H1 (cell line): ENCODE measurements at regions of chr10 and their contacts with region 1.

Region 1: DNA sequence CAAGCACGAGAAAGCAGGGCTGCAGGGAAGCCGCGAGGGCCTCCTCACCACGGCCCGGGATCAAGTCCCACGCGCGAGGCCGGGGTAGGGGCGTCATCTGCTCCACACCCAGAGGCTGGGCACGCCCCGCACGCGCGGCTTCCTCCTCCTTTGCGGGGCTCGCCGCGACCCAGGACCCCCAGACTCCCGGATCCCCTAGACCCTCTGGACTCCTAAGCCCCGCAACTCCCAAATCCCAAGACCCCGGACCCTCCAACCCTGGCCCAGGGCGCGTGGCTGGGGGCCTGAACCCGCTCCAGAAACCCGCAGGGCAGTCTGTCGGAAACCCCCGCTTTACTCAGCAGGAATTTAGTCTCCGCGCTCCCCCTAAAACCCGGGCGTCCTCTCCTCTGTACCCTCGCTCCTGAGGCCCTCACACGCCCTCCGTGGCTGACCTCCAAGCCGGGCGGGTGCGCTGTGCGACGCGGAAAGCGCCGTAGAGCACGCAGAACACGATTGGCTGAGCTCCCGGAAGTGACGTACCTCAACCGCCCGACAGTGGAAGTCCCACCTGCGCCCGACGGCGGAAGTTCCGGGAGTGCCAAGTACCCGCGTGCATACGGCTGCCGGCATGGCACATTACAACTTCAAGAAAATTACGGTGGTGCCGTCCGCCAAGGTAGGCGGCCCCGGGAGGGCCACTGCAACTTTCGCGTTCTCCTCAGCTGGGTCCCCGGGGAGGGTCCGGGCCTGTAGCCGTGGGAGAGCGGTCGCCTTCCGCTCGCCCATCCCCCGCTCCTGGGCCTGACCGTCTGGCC is at the start of gene GTPBP4:
- DNase-seq: peak; percentile 79 to 95
- H3K4me3 ChIP-seq: peak within 1 kb of the TSS; percentile 83 to 99 (median 93)
- H3K27ac ChIP-seq: peak within 1 kb of the TSS; percentile 86
- H3K4me1 ChIP-seq: peaks cover 0 to 3% (median 1%) of the 10 kb centered on the region in 4 experiments; a peak in 3 of 7 replicates
- H3K27me3 ChIP-seq: no peaks in the 10 kb centered on the region
- CTCF ChIP-seq: peak in 2 of 3 experiments; percentile 33 to 46; a peak in 3 of 4 replicates
- EP300 ChIP-seq: peak in 1 of 2 experiments; percentile 3; a peak in 1 of 3 replicates
- POLR2A ChIP-seq: peak; percentile 77 to 86
- RAD21 ChIP-seq: no peak; a peak in 1 of 4 replicates
- total RNA-seq, gene GTPBP4: 89.2 and 98.1 TPM in 2 replicates

Region 2: GRCh38 chr10:931416-932318 is 56.4 kb before region 1 on chr10 and contains the start of gene LARP4B:
- CTCF ChIA-PET with region 1: interaction called, 3 read pairs
- POLR2A ChIA-PET with region 1: interaction called, 28 read pairs
- DNase-seq: peak; percentile 90 to 93
- H3K4me3 ChIP-seq: peak within 1 kb of the TSS; percentile 73 to 98 (median 80)
- H3K27ac ChIP-seq: peak within 1 kb of the TSS; percentile 69; the same call in 1 of the 2 replicates
- H3K4me1 ChIP-seq: peaks cover 0 to 7% (median 5%) of the 10 kb centered on the region in 4 experiments; a peak in 4 of 7 replicates
- H3K27me3 ChIP-seq: no peaks in the 10 kb centered on the region
- CTCF ChIP-seq: no peak
- EP300 ChIP-seq: no peak
- POLR2A ChIP-seq: peak in 1 of 2 experiments; percentile 54; a peak in 2 of 3 replicates
- RAD21 ChIP-seq: no peak
- total RNA-seq, gene LARP4B: 78.6 and 82.8 TPM in 2 replicates

Region 3: DNA sequence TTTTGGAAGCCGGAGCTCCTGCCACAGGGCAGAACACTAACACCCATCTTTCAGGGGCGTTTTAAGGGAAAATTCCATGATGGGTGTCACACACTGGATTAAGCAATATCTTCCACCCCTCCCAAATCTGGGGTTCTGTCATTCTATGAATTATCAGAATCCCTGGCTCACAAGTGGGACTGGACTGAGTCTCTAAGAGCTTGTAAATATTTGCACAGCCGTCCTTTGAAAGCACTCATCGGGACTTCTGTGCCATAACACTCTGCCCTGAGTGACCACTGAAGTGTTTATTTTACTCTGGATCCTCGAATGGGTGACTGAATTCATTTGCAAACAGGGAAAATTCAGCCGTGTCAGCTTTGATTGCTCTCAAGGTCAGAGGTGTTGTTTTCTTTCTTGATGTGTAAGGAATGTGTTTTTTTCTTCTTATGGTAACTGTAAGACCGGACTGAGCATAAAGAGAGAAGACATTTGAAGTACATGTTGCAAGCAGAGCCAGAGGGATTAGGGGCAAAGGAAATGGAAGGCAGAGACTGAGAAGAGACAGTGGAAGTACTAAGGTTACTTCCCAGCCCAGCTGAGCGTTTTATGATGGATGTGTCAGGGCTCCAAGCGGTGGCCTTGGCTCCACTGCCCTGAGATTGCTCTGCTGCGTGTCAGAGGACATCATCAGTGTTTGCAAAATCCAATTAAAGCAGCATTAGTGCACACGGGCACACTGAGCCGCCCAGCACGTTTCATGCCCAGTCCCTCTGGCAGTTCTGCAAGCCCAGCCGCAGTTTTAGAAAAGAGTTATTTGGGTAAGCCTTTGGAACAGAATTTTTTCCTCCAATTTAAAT is 17.5 kb before region 1 on chr10:
- CTCF ChIA-PET with region 1: interaction called, 16 read pairs
- POLR2A ChIA-PET with region 1: interaction called, 34 read pairs
- DNase-seq: no peak
- H3K4me3 ChIP-seq: no peak overlapping the region
- H3K27ac ChIP-seq: no peak overlapping the region
- H3K4me1 ChIP-seq: peaks cover 0 to 10% (median 3%) of the 10 kb centered on the region in 4 experiments; a peak in 4 of 7 replicates
- H3K27me3 ChIP-seq: no peaks in the 10 kb centered on the region
- CTCF ChIP-seq: no peak
- EP300 ChIP-seq: no peak
- POLR2A ChIP-seq: no peak
- RAD21 ChIP-seq: no peak

Region 4: DNA sequence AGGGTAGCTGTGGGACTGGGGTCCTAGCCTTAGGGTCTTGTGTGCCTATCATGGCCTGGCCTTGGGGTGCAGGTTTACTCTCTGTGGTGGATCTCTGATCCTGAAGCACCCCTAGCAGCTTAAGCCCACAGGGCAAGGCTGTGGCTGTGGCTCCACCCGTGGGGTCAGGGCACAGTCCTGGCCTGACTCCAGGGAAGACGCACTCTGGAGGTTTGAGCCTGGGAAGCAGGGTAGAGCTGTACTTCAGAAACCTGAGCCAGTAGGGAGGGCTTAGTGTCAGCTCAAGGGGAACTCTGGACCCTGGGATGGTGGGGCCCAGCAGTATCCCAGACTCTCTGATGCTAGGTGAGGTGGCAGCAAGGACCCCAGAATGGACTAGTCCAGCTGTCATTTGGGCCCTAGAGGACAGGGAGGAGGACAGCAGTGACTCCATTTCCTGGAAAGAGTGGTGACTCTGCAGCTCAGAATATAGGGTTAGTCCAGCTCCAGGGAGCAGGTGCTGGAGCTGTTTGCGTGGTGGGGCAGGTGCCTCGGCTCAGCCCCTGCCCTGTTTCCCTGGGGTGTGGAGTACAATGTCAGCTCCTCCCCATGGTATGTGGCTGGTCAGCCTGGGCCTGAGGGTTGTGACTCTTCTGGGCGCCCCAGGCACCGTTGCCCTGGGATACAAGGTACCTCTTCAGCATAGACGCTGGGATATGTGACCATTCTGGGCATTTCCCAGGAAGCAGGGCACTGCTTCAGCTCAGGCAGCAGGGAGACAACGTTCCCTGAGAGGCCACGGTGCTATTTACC is 16.0 kb after region 1 on chr10:
- CTCF ChIA-PET with region 1: no interaction called
- POLR2A ChIA-PET with region 1: interaction called, 28 read pairs
- DNase-seq: no peak
- H3K4me3 ChIP-seq: no peak overlapping the region
- H3K27ac ChIP-seq: no peak overlapping the region; the same call in 1 of the 2 replicates
- H3K4me1 ChIP-seq: no peaks in the 10 kb centered on the region
- H3K27me3 ChIP-seq: no peaks in the 10 kb centered on the region
- CTCF ChIP-seq: no peak
- EP300 ChIP-seq: no peak
- POLR2A ChIP-seq: no peak
- RAD21 ChIP-seq: no peak

Region 5: DNA sequence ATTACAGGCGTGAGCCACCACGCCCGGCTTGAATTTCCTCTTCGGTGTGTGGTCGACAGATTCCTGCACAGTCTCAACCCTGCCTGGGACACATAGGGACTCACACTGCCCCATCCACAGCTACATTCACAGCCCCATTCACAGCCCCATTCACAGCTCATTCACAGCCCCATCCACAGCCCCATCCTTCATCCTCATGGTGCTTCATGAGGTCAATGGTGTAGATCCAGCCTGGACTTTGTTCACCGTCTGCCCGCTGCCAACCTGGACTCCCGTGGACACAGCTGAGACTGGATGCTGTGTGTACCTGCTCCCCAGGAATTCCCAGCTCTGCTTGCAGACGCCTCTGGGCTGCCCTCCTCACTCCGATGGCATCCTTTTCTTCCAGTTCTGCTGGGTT is 32.4 kb after region 1 on chr10:
- CTCF ChIA-PET with region 1: no interaction called
- POLR2A ChIA-PET with region 1: interaction called, 20 read pairs
- DNase-seq: no peak
- H3K4me3 ChIP-seq: no peak overlapping the region
- H3K27ac ChIP-seq: no peak overlapping the region
- H3K4me1 ChIP-seq: no peaks in the 10 kb centered on the region; a peak in 1 of 7 replicates
- H3K27me3 ChIP-seq: no peaks in the 10 kb centered on the region
- CTCF ChIP-seq: no peak
- EP300 ChIP-seq: no peak
- POLR2A ChIP-seq: no peak
- RAD21 ChIP-seq: no peak

Region 6: GRCh38 chr10:1048732-1049424 is 60.8 kb after region 1 on chr10 and contains the start of gene IDI1:
- CTCF ChIA-PET with region 1: interaction called, 3 read pairs
- POLR2A ChIA-PET with region 1: interaction called, 22 read pairs
- DNase-seq: peak; percentile 91 to 94
- H3K4me3 ChIP-seq: peak within 1 kb of the TSS; percentile 79 to 98 (median 95)
- H3K27ac ChIP-seq: peak within 1 kb of the TSS; percentile 98
- H3K4me1 ChIP-seq: peaks cover 0 to 5% (median 2%) of the 10 kb centered on the region in 4 experiments; a peak in 3 of 7 replicates
- H3K27me3 ChIP-seq: no peaks in the 10 kb centered on the region
- CTCF ChIP-seq: no peak; a peak in 1 of 4 replicates
- EP300 ChIP-seq: no peak
- POLR2A ChIP-seq: peak; percentile 57 to 85
- RAD21 ChIP-seq: no peak
- total RNA-seq, gene IDI1: 56.6 and 60.5 TPM in 2 replicates